Activated CD8-positive, alpha-beta T cell treated with anti-CD3 and anti-CD28 coated beads, Interleukin-2, amount 10 ng/mL, durations not matched to agents 7 days and 5 days (primary cell): ENCODE measurements at regions of chr2 and their contacts with region 1.

Region 1: GRCh38 chr2:25817630-25818029 is 60.7 kb downstream of the ASXL2 start:
- DNase-seq: no peak
- ATAC-seq: peak; percentile 69
- H3K4me3 Mint-ChIP-seq: peak overlapping the region; percentile 43
- H3K27ac Mint-ChIP-seq: peak overlapping the region; percentile 73
- H3K4me1 Mint-ChIP-seq: peaks cover 52% of the 10 kb centered on the region
- H3K27me3 Mint-ChIP-seq: no peaks in the 10 kb centered on the region

Region 2: DNA sequence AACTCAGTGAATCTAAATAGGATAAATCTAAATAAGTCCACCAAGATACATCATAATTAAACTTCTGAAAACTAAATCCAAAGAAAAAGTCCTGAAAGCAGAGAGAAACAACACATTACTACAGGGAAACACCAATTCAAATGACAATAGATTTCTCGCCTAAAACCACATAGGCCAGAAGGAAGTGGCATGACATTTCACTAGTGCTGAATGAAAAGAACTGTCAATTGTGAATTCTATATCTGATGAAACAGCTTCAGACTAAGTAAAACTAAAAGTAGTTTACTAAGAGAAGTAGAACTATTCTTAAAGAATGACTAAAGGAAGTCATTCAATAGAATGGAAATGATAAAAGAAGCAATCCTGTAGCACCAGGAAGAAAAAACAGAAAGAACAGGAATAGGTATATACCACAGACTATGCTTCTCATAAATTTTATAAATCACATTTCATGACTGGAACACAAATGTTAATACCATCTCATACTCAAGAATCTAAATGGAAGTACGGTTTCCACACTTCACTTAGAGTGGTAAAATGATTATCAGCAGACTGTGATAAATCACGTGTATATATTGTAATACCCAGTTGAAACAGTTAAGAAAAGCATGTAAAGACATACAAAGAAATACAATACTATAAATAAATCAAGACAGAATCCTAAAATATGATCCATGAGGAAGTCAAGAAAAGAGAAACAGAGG is 14.3 kb after region 1 on chr2:
- CTCF ChIA-PET with region 1: interaction called, 11 read pairs
- POLR2A ChIA-PET with region 1: interaction called, 4 read pairs
- DNase-seq: peak; percentile 50
- ATAC-seq: peak; percentile 87
- H3K4me3 Mint-ChIP-seq: peak overlapping the region; percentile 73
- H3K27ac Mint-ChIP-seq: peak overlapping the region; percentile 97
- H3K4me1 Mint-ChIP-seq: peaks cover 58% of the 10 kb centered on the region
- H3K27me3 Mint-ChIP-seq: no peaks in the 10 kb centered on the region